GM10248 (cell line): ENCODE measurements at regions of chr5 and their contacts with region 1.

Region 1: GRCh38 chr5:119315516-119315949 is 40.3 kb upstream of the TNFAIP8 start:
- DNase-seq: peak; percentile 73
- CTCF ChIP-seq: peak; percentile 78

Region 2: GRCh38 chr5:119088438-119088837 is 227.1 kb before region 1 on chr5:
- CTCF ChIA-PET with region 1: no interaction called
- POLR2A ChIA-PET with region 1: no interaction called
- DNase-seq: no peak
- CTCF ChIP-seq: no peak

Region 3: GRCh38 chr5:119267958-119268386 is 47.6 kb before region 1 on chr5:
- CTCF ChIA-PET with region 1: interaction called, 21 read pairs
- POLR2A ChIA-PET with region 1: no interaction called
- DNase-seq: peak; percentile 83
- CTCF ChIP-seq: peak; percentile 81

Region 4: GRCh38 chr5:119290161-119290569 is 25.4 kb before region 1 on chr5:
- CTCF ChIA-PET with region 1: interaction called, 16 read pairs
- POLR2A ChIA-PET with region 1: no interaction called
- DNase-seq: peak; percentile 29
- CTCF ChIP-seq: no peak

Region 5: DNA sequence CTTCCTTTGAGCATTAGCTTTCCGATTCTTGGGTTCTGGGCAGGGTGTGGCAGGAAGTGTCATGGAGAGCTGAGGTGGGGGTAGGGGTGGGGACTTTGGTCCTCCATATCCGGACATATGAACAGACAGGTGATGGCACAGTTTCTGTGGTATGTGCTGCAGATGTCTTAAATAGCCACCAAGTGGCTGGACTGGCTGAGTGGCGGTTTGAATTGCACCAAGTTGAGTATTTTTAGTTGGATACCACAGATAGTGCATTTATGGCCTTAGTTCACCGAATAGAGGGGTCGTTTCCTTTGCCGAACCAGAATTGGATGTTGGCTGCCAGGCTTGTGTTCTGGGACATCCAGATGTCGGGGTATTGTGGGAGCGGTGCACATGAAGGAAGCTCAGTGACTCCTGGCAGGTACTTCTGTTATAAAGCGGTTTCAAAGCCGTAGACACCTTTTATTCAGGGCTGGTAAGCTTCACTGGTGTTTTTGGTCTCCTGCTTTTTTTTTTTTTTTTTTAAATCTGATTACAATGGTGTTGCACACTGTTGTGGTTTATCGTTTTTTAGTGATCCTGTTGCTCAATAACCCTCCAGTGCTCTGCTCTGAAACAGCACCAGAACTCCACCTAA is 25.2 kb after region 1 on chr5:
- CTCF ChIA-PET with region 1: interaction called, 191 read pairs
- POLR2A ChIA-PET with region 1: no interaction called
- DNase-seq: peak; percentile 55
- CTCF ChIP-seq: no peak

Region 6: DNA sequence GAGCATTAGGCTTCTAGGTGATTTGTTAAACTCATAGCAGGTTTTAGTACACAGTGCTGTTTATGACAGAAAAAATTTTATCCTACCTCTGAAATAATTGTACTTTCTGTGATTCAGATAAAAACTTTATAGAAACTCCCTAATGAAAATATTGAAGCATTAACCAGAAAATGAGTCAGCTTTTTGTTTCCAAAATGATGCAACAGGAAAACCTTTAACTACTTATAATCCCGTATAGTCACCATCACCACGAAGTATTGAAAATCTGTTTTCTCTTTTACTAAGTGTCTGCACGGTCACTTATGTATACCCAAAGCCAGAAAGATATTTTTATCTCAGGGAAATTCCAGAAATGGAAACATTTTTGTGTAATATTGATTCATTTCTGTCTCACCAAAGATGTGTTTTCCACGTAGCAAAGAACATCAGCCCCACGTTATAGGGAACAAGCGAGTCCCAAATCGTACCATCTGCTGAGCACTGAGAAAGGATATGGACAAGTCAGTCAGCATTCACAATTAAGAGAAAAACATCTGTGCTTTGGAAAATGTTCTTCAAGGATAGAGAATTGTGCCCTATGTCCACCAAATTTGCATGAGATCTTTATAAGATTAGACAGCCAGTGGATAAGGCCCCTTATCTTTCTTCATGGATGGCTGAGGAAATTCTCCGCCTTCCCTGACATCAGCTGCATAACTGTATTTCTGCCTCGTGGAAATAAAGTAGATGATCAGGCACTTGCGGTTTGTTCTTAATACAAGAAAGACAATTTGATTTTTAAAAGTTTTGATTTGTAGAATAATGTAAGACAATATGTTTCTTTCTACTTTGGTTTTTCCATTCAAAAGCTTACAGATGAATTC is 82.2 kb after region 1 on chr5:
- CTCF ChIA-PET with region 1: interaction called, 13 read pairs
- POLR2A ChIA-PET with region 1: no interaction called
- DNase-seq: no peak
- CTCF ChIP-seq: no peak